ENCODE measurements at regions of chr9 and their contacts with region 1.

Region 1: GRCh38 chr9:126985870-126986498 is 71.4 kb downstream of the RALGPS1 start:
- DNase-seq: peak; percentile 96
- H3K4me3 ChIP-seq: no peak overlapping the region
- H3K27ac ChIP-seq: no peak overlapping the region
- H3K4me1 ChIP-seq: peaks cover 27% of the 10 kb centered on the region
- H3K27me3 ChIP-seq: peaks cover 39% of the 10 kb centered on the region
- CTCF ChIP-seq: no peak

Region 2: DNA sequence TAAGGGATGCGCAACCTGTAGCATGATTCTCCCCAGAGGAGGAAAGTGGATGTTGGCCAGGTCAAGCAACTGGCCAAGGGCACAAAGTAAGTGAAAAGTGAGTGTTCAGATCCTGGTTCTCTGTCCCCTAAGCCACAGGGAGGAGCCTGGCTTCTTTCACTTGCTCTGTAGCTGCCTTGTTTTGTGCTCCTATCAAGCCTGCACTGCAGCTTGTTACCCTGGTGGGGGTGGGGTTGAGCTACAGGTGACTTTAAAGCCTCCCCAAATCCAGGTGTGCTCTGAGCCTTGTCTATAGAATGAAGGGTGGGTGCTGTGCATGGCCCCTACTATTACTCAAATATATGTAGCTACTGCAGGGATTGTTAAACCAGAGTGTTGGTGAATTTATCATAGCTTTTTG is 38.5 kb before region 1 on chr9:
- CTCF ChIA-PET with region 1: no interaction called
- dilution Hi-C with region 1: no loop called
- in situ Hi-C with region 1: no loop called
- intact Hi-C with region 1: no loop called
- DNase-seq: no peak
- H3K4me3 ChIP-seq: no peak overlapping the region
- H3K27ac ChIP-seq: no peak overlapping the region
- H3K4me1 ChIP-seq: no peaks in the 10 kb centered on the region
- H3K27me3 ChIP-seq: peaks cover 1% of the 10 kb centered on the region
- CTCF ChIP-seq: peak; percentile 12 to 39

Region 3: GRCh38 chr9:127089631-127090081 is 103.7 kb after region 1 on chr9:
- CTCF ChIA-PET with region 1: no interaction called
- dilution Hi-C with region 1: loop called (anchors 5 kb)
- in situ Hi-C with region 1: no loop called
- intact Hi-C with region 1: no loop called
- DNase-seq: no peak
- H3K4me3 ChIP-seq: no peak overlapping the region
- H3K27ac ChIP-seq: no peak overlapping the region
- H3K4me1 ChIP-seq: no peaks in the 10 kb centered on the region
- H3K27me3 ChIP-seq: peaks cover 2% of the 10 kb centered on the region
- CTCF ChIP-seq: no peak

Measured in mammary epithelial cell (primary cell).